Activated naive CD4-positive, alpha-beta T cell treated with anti-CD3 and anti-CD28 coated beads for 36 hours (primary cell): ENCODE measurements at regions of chr6 and their contacts with region 1.

Region 1: GRCh38 chr6:150813319-150813992 is 52.0 kb upstream of the MTHFD1L start:
- DNase-seq: peak; percentile 75
- H3K4me3 Mint-ChIP-seq: no peak overlapping the region
- H3K27ac Mint-ChIP-seq: peak overlapping the region; percentile 85
- H3K4me1 Mint-ChIP-seq: peaks cover 23% of the 10 kb centered on the region
- H3K27me3 Mint-ChIP-seq: peaks cover 25% of the 10 kb centered on the region

Region 2: GRCh38 chr6:150004783-150005717 is 808.4 kb before region 1 on chr6:
- CTCF ChIA-PET with region 1: no interaction called
- intact Hi-C with region 1: loop called (anchors 10 kb)
- DNase-seq: peak; percentile 94
- H3K4me3 Mint-ChIP-seq: peak overlapping the region; percentile 86
- H3K27ac Mint-ChIP-seq: no peak overlapping the region
- H3K4me1 Mint-ChIP-seq: peaks cover 51% of the 10 kb centered on the region
- H3K27me3 Mint-ChIP-seq: peaks cover 26% of the 10 kb centered on the region

Region 3: DNA sequence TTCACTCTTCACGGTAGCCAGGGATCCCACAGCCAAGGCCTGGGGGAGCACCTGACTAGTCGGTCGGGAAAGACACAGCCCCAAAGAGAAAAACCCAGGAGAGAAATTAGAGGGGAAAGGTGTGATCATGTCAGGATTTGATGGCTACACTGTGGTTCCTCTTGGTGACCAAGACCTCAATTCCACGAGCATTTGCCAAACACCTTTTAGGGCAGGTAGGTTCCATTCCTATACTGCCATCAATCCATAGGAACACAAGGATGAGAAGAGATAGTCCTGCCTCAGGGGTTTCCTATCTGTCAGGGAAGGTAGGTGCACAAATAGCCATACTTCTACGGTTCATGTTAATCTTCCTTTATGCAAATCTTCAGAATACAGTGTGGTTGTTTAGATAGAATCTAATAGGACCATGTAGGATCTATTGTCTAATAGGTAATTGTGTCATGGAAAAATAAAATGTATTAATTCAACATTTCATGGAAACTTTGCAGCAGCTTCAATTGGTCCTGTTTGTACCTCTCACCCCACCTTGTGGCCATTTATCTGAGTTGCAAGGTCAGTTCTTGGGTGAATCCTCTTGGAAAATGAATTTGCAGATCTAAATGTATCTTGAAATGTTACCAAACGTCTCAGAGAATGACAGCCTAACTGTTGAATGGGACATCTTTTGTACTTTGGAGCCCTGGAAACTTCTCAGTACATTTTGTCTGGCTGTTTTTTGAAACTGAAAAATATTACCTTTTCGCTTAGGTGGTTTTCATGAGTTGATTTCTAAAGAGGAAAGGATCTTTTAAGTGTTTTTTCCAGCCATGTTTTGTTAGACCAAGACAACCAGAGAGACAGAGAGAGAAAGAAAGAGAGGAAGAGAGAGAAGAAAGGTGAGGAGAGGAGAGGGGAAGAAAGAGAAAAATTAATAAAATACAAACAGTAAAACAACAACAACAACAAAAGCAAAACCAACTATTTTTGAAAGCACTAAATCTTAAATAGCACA is 478.4 kb before region 1 on chr6:
- CTCF ChIA-PET with region 1: interaction called, 4 read pairs
- intact Hi-C with region 1: loop called (anchors 2 kb)
- DNase-seq: peak; percentile 64
- H3K4me3 Mint-ChIP-seq: no peak overlapping the region
- H3K27ac Mint-ChIP-seq: no peak overlapping the region
- H3K4me1 Mint-ChIP-seq: no peaks in the 10 kb centered on the region
- H3K27me3 Mint-ChIP-seq: peaks cover 2% of the 10 kb centered on the region

Region 4: GRCh38 chr6:150491131-150491810 is 322.2 kb before region 1 on chr6:
- CTCF ChIA-PET with region 1: interaction called, 7 read pairs
- intact Hi-C with region 1: loop called (anchors 1 kb)
- DNase-seq: peak; percentile 20
- H3K4me3 Mint-ChIP-seq: peak overlapping the region; percentile 51
- H3K27ac Mint-ChIP-seq: peak overlapping the region; percentile 82
- H3K4me1 Mint-ChIP-seq: peaks cover 9% of the 10 kb centered on the region
- H3K27me3 Mint-ChIP-seq: peaks cover 6% of the 10 kb centered on the region

Region 5: DNA sequence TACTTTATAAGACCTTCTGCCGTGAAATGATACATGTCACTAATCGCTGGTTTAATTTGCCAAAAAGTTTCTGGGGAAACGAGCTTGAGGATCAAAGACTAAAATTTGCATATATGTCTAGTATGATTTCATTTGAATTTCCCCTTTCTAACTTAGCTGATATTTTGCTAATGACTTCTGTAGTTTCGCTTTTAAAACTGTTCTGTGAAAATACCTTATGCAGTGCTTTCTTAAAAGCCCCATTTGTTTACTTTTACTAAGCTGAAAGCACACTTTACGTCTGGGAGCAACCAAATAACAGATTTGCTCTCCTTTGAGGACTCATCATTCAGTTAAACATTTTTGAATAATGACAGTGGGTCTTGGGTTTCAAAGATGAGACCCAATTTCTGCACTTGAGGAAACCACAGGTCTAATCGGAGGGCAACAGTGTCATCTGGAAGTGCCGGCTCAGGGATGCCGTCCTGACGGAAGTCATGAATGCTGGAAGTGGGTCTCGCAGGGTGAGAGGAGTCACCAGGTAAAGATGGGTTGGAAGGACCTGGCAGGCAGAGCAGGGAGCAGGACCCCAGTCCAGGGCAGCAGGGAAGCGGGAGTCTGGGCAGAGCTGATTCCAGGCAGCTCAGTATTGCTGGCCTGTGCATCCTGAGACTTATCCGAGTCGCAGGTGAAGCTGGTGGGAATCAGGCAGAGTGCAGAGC is 180.5 kb before region 1 on chr6:
- CTCF ChIA-PET with region 1: interaction called, 3 read pairs
- intact Hi-C with region 1: loop called (anchors 2 kb)
- DNase-seq: peak; percentile 17
- H3K4me3 Mint-ChIP-seq: peak overlapping the region; percentile 57
- H3K27ac Mint-ChIP-seq: peak overlapping the region; percentile 84
- H3K4me1 Mint-ChIP-seq: peaks cover 62% of the 10 kb centered on the region
- H3K27me3 Mint-ChIP-seq: peaks cover 44% of the 10 kb centered on the region

Region 6: DNA sequence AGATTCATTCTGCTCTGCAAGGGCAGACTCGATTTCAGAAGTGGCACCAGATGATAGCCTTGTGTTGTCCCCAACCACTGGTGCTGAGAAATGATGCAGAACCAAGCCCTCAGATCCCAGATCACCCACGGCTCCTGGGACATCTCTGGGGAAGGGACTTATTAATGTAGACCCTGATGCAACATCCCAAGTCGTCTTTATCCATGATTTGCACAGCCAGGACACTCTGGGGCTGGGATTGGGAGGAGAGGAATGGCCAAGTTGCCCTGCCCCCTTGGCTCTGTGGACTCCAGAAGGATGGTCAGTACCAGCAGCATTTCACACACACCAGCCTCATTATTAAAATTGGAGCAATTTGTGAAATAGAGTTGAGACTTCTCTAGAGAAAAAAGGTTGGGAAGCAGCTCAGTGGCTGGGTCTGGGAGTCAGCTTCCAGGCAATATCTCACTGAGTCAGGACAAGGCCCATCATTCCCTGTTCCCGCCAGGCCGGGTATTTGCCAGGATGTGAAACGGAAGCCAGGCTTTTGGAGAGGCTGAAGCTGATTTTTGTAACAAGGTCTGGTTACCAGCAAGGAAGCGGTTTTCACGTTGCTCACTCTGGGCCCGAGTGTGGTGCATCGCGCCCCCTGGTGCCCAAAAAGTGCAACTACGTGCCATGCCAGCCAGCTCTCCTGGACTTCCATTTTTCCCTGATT is 510.5 kb after region 1 on chr6:
- CTCF ChIA-PET with region 1: interaction called, 7 read pairs
- intact Hi-C with region 1: loop called (anchors 2 kb)
- DNase-seq: peak; percentile 84
- H3K4me3 Mint-ChIP-seq: peak overlapping the region; percentile 18
- H3K27ac Mint-ChIP-seq: no peak overlapping the region
- H3K4me1 Mint-ChIP-seq: peaks cover 18% of the 10 kb centered on the region
- H3K27me3 Mint-ChIP-seq: peaks cover 42% of the 10 kb centered on the region